ENCODE measurements at regions of chrX and their contacts with region 1.

Region 1: GRCh38 chrX:13263560-13264251 is 56.1 kb downstream of the ATXN3L start:
- DNase-seq: no peak
- ATAC-seq: peak; percentile 49
- H3K4me3 Mint-ChIP-seq: no peak overlapping the region
- H3K27ac Mint-ChIP-seq: no peak overlapping the region
- H3K4me1 Mint-ChIP-seq: peaks cover 12% of the 10 kb centered on the region
- H3K27me3 Mint-ChIP-seq: no peaks in the 10 kb centered on the region

Region 2: DNA sequence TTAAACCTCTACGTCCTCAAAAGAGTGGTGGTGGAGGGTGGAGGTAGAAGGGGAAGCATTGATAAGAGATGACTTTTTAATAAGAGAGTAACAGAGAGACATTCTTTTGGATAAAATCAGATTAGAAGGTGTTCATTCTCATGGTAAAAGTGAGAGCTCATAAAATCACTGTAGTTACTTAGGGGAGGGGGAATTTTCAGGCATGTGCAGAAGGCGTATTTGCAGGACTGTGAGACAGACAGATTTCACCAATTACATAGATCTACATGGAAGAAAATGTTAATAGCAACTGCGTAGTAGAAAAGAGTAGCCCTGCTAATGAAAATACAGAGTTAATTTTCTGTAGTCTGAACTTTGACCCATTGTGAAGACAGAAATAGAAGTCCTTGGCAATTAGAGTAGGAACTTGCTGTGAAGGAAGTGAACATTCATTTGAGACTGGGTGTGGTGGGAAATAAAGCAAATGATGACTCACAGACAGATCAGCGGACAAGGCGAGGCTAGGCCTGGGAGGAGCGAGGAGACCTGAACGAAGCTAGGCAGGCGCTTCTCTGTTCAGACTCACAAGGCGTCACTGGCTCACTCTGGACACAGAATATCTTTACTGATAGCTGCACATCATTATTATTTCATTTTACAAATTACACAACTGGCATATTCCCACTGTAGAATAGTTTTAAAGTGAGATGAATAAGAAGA is 162.1 kb before region 1 on chrX:
- CTCF ChIA-PET with region 1: no interaction called
- POLR2A ChIA-PET with region 1: no interaction called
- intact Hi-C with region 1: loop called (anchors 5 to 10 kb)
- DNase-seq: peak; percentile 66
- ATAC-seq: peak; percentile 98
- H3K4me3 Mint-ChIP-seq: no peak overlapping the region
- H3K27ac Mint-ChIP-seq: peak overlapping the region; percentile 29
- H3K4me1 Mint-ChIP-seq: peaks cover 49% of the 10 kb centered on the region
- H3K27me3 Mint-ChIP-seq: no peaks in the 10 kb centered on the region

Region 3: GRCh38 chrX:13177921-13178566 is 85.7 kb before region 1 on chrX:
- CTCF ChIA-PET with region 1: no interaction called
- POLR2A ChIA-PET with region 1: no interaction called
- intact Hi-C with region 1: loop called in 1 of 2 experiments (anchors 5 kb)
- DNase-seq: no peak
- ATAC-seq: peak; percentile 49
- H3K4me3 Mint-ChIP-seq: no peak overlapping the region
- H3K27ac Mint-ChIP-seq: no peak overlapping the region
- H3K4me1 Mint-ChIP-seq: peaks cover 12% of the 10 kb centered on the region
- H3K27me3 Mint-ChIP-seq: no peaks in the 10 kb centered on the region

Region 4: DNA sequence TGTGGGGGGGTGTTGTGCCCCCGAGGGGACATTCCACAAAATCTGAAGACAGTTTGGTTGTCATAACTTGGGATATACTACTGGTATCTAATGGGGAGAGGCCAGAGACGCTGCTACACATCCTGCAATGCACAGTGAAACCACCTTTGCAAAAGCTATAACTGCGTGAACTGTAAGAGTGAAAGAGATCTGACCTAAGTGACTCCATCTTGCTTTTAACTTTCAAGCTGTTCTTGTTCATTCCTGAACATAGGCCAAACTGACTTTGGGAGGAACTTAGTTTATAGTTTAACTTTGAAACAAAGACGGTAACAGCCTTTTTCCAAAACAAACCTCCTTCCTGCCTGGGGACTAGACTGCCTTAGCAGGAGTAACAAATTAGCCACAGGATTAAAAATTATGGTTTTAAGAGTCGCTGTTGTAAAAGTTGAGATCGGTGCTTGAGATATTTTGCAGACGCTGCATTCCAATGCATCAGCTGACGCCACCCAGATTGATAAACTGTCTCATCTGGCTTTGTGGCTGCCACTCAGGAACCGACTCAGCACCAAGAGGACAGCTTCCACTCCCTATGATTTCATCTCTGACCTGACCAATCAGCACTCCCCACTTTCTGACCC is 14.7 kb before region 1 on chrX:
- CTCF ChIA-PET with region 1: no interaction called
- POLR2A ChIA-PET with region 1: no interaction called
- intact Hi-C with region 1: no loop called
- DNase-seq: no peak
- ATAC-seq: no peak
- H3K4me3 Mint-ChIP-seq: no peak overlapping the region
- H3K27ac Mint-ChIP-seq: no peak overlapping the region
- H3K4me1 Mint-ChIP-seq: peaks cover 19% of the 10 kb centered on the region
- H3K27me3 Mint-ChIP-seq: no peaks in the 10 kb centered on the region

Region 5: GRCh38 chrX:13317366-13317765 is 53.7 kb after region 1 on chrX:
- CTCF ChIA-PET with region 1: no interaction called
- POLR2A ChIA-PET with region 1: no interaction called
- intact Hi-C with region 1: no loop called
- DNase-seq: no peak
- ATAC-seq: no peak
- H3K4me3 Mint-ChIP-seq: no peak overlapping the region
- H3K27ac Mint-ChIP-seq: no peak overlapping the region
- H3K4me1 Mint-ChIP-seq: no peaks in the 10 kb centered on the region
- H3K27me3 Mint-ChIP-seq: no peaks in the 10 kb centered on the region